Endothelial cell of umbilical vein (primary cell): ENCODE measurements at regions of chrX and their contacts with region 1.

Region 1: DNA sequence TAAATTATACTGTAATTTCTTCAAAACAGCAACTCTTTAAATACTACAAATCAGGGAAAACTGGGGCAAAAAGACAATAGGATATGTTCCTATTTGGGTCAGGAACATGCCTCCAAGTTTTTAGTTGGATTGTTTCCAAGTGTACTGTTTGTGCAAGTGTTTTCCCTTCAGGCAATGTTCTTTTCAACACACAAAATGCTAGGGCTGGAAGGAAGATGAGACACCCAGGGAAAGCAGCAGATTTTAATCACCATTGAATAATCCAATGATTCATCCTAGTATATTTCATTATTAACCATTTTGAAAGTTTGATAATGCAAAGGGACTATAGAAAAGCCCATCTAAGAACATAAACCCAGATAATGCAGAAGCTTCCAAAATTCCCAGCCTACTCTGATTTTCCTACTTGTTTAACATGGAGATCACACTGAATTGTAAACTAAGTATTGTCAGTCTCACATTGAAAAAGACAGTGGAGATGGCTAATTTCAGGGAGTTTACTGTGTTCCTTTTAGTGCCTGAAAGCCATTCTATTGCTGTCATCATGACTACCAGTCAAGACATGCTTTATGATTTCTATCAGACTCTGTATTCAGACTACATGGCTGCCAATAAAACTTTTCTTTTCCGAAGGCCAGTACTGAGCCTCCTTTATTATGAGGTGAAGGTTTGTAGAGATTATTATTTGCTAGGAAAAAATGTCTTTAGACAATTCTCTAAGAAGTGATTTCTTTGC is 38.6 kb downstream of the COL4A6 start:
- DNase-seq: peak; percentile 50
- H3K4me3 ChIP-seq: no peak overlapping the region
- H3K27ac ChIP-seq: peak overlapping the region; percentile 57
- H3K4me1 ChIP-seq: peaks cover 36% of the 10 kb centered on the region
- H3K27me3 ChIP-seq: no peaks in the 10 kb centered on the region
- CTCF ChIP-seq: no peak
- POLR2A ChIP-seq: no peak

Region 2: GRCh38 chrX:106917830-106918500 is 1481.6 kb before region 1 on chrX:
- CTCF ChIA-PET with region 1: no interaction called
- POLR2A ChIA-PET with region 1: no interaction called
- dilution Hi-C with region 1: no loop called
- intact Hi-C with region 1: no loop called
- DNase-seq: peak; percentile 86
- H3K4me3 ChIP-seq: no peak overlapping the region
- H3K27ac ChIP-seq: no peak overlapping the region
- H3K4me1 ChIP-seq: peaks cover 17% of the 10 kb centered on the region
- H3K27me3 ChIP-seq: peaks cover 3 to 17% of the 10 kb centered on the region in 2 experiments
- CTCF ChIP-seq: no peak
- POLR2A ChIP-seq: no peak

Region 3: GRCh38 chrX:108359806-108360602 is 39.6 kb before region 1 on chrX:
- CTCF ChIA-PET with region 1: no interaction called
- POLR2A ChIA-PET with region 1: no interaction called
- dilution Hi-C with region 1: no loop called
- intact Hi-C with region 1: no loop called
- DNase-seq: no peak
- H3K4me3 ChIP-seq: no peak overlapping the region
- H3K27ac ChIP-seq: no peak overlapping the region
- H3K4me1 ChIP-seq: no peaks in the 10 kb centered on the region
- H3K27me3 ChIP-seq: no peaks in the 10 kb centered on the region
- CTCF ChIP-seq: no peak
- POLR2A ChIP-seq: no peak

Region 4: GRCh38 chrX:108439434-108439883 is 39.9 kb after region 1 on chrX and contains the start of gene COL4A5:
- CTCF ChIA-PET with region 1: no interaction called
- POLR2A ChIA-PET with region 1: no interaction called
- dilution Hi-C with region 1: no loop called
- intact Hi-C with region 1: loop called (anchors 2 kb)
- DNase-seq: peak; percentile 79
- H3K4me3 ChIP-seq: peak within 1 kb of the TSS; percentile 37 to 76 (median 66)
- H3K27ac ChIP-seq: peak within 1 kb of the TSS; percentile 19
- H3K4me1 ChIP-seq: peaks cover 8% of the 10 kb centered on the region
- H3K27me3 ChIP-seq: peaks cover 0 to 2% of the 10 kb centered on the region in 2 experiments
- CTCF ChIP-seq: no peak
- POLR2A ChIP-seq: no peak
- total RNA-seq, gene COL4A5: 15.4 and 28.1 TPM in 2 replicates